ENCODE measurements at regions of chr19 and their contacts with region 1.

Region 1: DNA sequence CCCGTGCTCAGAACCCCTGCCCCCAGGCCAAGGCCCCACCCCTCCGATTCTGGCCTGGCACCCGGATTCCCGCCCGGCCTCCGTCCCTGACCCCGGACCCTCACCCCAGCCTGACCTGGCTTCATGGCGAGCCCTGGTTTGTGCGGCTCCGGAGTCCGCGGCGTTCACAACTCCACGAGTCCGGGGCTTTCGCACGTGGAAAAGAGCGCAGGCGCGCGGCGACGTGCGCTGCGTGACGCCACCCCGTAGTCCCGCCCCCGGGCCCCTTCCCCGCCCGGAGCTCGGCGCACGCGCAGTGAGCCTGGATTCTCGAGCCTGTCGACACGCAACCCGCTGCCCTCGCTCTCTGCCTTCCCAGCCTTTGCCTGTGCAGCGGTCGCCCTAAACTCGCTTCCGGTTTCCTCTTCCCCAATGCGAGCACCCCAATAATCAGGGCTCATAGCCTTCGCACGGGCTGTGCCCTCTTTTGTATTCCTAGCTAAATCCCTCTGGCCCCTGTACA is at the start of gene FBL:
- DNase-seq: peak; percentile 95 to 99 (median 96)
- ATAC-seq: peak; percentile 96 to 98 (median 96)
- H3K4me3 ChIP-seq: peak within 1 kb of the TSS; percentile 62 to 89 (median 80)
- H3K27ac ChIP-seq: peak within 1 kb of the TSS; percentile 64 to 93 (median 84)
- H3K4me1 ChIP-seq: peaks cover 0 to 48% (median 29%) of the 10 kb centered on the region in 12 donors
- H3K27me3 ChIP-seq: no peaks in the 10 kb centered on the region
- CTCF ChIP-seq: no peak
- POLR2A ChIP-seq: peak in 1 of 2 donors; percentile 92
- total RNA-seq, gene FBL: 44.3 to 94.3 (median 70.5) TPM

Region 2: DNA sequence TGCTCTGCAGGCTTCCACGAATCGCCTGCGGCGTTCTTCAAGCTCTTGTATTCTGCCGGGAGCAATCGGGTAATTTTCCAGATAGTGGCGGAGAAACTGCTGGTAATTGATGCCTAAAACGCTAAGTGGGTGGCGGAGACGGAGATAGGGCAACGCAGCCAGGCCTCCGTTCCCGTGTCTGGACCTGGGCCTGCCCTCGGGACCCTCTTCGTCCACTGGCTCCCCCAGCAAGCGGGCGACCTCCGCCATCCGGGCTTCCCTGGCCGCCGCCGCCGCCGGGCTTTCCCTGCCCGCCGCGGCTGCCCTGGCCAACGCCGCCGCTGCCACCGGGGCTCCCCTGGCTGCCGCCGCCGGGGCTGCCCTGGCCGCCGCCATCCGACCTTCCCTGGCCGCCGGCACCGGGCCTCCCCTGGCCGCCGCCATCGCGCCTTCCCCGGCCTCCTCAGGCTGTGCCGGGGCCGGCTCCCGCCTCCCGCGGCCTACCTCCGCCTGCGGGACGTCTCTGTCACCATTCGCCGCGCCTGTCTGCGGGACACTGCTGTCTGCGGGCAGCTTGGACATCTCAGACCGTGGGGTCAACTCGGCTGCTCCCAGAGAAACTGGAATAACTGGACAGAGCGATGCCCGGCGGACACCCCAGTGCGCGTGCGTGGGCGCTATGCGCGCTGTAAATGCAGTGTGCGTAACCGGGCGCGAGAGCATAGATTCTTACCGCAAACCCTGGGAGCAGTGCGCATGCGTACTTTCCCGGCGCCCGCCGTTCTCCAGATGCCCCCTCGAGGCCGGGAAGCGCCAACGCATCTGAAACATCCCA is 306.5 kb before region 1 on chr19 and contains the start of gene EID2:
- intact Hi-C with region 1: loop called in 2 of 10 experiments (anchors 10 kb)
- DNase-seq: peak; percentile 95 to 98 (median 97)
- ATAC-seq: peak; percentile 94 to 99 (median 98)
- H3K4me3 ChIP-seq: peak within 1 kb of the TSS; percentile 56 to 98 (median 81)
- H3K27ac ChIP-seq: peak within 1 kb of the TSS; percentile 85 to 98 (median 94)
- H3K4me1 ChIP-seq: peaks cover 0 to 24% (median 18%) of the 10 kb centered on the region in 12 donors
- H3K27me3 ChIP-seq: no peaks in the 10 kb centered on the region
- CTCF ChIP-seq: peak; percentile 78 to 97 (median 85)
- POLR2A ChIP-seq: peak in 1 of 2 donors; percentile 92
- total RNA-seq, gene EID2: 7.1 to 14.6 (median 12.6) TPM

Region 3: GRCh38 chr19:39557441-39558151 is 288.6 kb before region 1 on chr19:
- intact Hi-C with region 1: loop called in 3 of 10 experiments (anchors 10 kb)
- DNase-seq: no peak
- ATAC-seq: peak in 2 of 4 donors; percentile 31 to 44
- H3K4me3 ChIP-seq: peak overlapping the region in 2 of 12 donors; percentile 16 to 17
- H3K27ac ChIP-seq: peak overlapping the region in 1 of 12 donors; percentile 89
- H3K4me1 ChIP-seq: peaks cover 0 to 45% (median 0%) of the 10 kb centered on the region in 12 donors
- H3K27me3 ChIP-seq: peaks cover 0 to 3% (median 0%) of the 10 kb centered on the region in 9 donors
- CTCF ChIP-seq: no peak
- POLR2A ChIP-seq: no peak

Region 4: GRCh38 chr19:39765091-39766076 is 80.8 kb before region 1 on chr19:
- intact Hi-C with region 1: loop called in 1 of 10 experiments (anchors 2 kb)
- DNase-seq: peak in 3 of 5 donors; percentile 17 to 28 (median 21)
- ATAC-seq: no peak
- H3K4me3 ChIP-seq: no peak overlapping the region
- H3K27ac ChIP-seq: no peak overlapping the region
- H3K4me1 ChIP-seq: no peaks in the 10 kb centered on the region
- H3K27me3 ChIP-seq: peaks cover 0 to 10% (median 0%) of the 10 kb centered on the region in 9 donors
- CTCF ChIP-seq: peak; percentile 48 to 87 (median 66)
- POLR2A ChIP-seq: no peak

Region 5: GRCh38 chr19:39792999-39793546 is 53.2 kb before region 1 on chr19:
- intact Hi-C with region 1: loop called (anchors 1 to 2 kb)
- DNase-seq: peak; percentile 72 to 86 (median 76)
- ATAC-seq: peak; percentile 94 to 99 (median 98)
- H3K4me3 ChIP-seq: peak overlapping the region in 10 of 12 donors; percentile 30 to 79 (median 54)
- H3K27ac ChIP-seq: no peak overlapping the region
- H3K4me1 ChIP-seq: no peaks in the 10 kb centered on the region
- H3K27me3 ChIP-seq: peaks cover 0 to 9% (median 0%) of the 10 kb centered on the region in 9 donors
- CTCF ChIP-seq: peak; percentile 79 to 96 (median 90)
- POLR2A ChIP-seq: no peak

Region 6: DNA sequence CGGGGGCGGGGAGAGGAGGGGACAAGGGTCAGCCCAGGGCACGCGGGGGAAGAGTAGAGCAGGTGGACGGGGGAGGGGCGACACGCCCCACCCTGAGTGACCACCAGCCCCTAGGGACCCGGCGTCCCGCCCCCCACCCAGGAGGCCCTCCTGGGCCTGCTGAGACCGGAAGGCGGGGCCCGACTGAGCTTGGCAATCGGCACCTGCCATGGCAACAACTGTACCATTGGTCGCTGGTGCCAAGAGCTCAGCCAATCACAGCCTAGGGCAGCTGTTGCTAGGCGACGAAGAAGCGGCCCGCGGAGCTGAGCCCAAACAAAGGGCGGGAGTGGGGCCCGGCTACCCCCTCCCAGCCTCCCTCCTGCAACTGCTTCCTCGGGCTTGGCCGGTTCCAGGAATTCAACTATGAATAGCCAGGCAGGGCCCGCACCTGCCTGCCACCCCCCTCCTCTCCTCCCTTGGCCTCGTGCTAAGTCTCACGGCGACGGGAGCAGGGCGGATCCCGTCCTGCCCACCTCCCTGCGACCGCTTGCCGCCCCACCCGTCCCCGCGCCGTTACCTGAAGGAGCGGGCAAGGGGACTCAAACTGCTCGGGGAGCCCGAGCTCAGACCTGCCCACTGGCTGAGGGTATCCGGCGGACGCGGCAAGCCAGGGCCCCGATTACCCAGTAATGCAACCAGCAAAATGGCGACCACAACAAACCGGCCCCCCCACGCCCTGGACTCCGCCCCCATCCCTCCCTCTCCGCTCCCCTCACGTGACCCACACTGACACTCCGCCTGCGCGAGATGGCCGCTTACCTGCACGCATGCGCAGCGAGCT is 12.6 kb before region 1 on chr19 and contains the start of gene DYRK1B:
- intact Hi-C with region 1: loop called in 1 of 10 experiments (anchors 1 kb)
- DNase-seq: peak; percentile 98 to 99 (median 99)
- ATAC-seq: peak; percentile 92 to 95 (median 95)
- H3K4me3 ChIP-seq: peak within 1 kb of the TSS; percentile 65 to 99 (median 83)
- H3K27ac ChIP-seq: peak within 1 kb of the TSS; percentile 76 to 97 (median 90)
- H3K4me1 ChIP-seq: peaks cover 5 to 25% (median 20%) of the 10 kb centered on the region in 12 donors
- H3K27me3 ChIP-seq: no peaks in the 10 kb centered on the region
- CTCF ChIP-seq: no peak
- POLR2A ChIP-seq: peak in 1 of 2 donors; percentile 52
- total RNA-seq, gene DYRK1B: 12.8 to 49.1 (median 28.7) TPM